Activated T-helper 1 cell treated with anti-CD3 and anti-CD28 coated beads, Interleukin-12 subunit alpha, Interleukin-12 subunit beta, Interleukin-2, Interleukin-4 antibody, amounts not matched to agents 30 ng/mL and 10 ng/mL and 1 ng/mL, durations not matched to agents 14 hours and 24 hours and 36 hours (primary cell): ENCODE measurements at regions of chr4 and their contacts with region 1.

Region 1: DNA sequence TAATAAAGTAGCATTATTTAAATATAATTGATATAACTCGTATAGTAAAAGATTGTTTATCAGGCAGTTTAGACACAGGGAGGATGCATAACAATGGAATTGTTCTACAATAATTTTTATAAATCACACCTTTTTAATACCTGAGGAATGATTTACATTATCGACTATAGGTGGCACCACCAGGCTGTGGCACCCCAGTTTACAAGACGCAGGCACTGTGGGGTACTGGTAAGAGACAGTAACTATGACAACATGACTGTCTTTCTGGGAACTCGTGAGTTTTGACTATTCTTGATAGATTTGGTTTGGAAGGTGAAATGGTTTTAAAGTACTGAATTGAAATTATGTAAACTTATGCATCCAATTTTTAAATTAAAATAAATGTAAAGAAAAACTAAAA is 27.1 kb upstream of the STBD1 start:
- DNase-seq: no peak
- H3K4me3 Mint-ChIP-seq: no peak overlapping the region
- H3K27ac Mint-ChIP-seq: no peak overlapping the region
- H3K4me1 Mint-ChIP-seq: no peaks in the 10 kb centered on the region
- H3K27me3 Mint-ChIP-seq: peaks cover 19% of the 10 kb centered on the region

Region 2: DNA sequence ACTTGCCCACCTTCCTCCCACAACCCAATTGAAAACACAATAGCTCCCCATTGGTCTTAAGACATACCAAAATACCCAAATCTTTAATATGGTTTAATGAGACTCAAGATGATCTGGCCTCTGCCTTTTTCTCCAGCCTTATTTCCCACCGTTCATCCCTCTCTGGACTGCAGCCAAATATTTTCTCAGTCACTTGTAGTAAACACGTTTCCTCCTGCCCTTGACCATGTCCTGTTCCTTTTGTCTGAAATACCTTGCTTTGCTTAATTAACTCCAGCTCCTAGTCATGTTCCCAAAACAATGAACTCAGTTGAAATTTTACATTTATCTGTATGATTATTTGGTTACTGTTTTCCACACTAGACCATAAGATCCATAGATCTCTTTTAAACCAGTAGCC is 122.8 kb before region 1 on chr4:
- intact Hi-C with region 1: no loop called
- DNase-seq: no peak
- H3K4me3 Mint-ChIP-seq: no peak overlapping the region
- H3K27ac Mint-ChIP-seq: no peak overlapping the region
- H3K4me1 Mint-ChIP-seq: no peaks in the 10 kb centered on the region
- H3K27me3 Mint-ChIP-seq: peaks cover 3% of the 10 kb centered on the region

Region 3: DNA sequence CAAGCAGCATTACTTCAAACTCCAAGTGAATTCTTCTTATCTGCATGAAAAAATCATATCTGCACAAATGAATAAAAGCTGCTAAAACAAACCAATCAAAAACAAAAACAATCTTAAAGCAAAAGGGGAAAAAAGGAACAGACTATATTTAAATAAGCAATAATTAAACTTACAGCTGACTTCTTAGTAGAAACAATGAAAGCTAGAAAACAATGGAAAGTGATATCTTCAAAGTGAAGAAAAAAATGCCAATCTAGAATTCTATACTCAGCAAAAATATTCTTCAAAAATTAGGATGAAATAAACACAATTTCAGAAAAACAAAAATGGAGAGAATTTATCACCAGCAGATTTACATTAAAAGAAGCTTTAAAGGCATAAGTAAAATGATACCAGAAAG is 47.0 kb after region 1 on chr4:
- intact Hi-C with region 1: no loop called
- DNase-seq: no peak
- H3K4me3 Mint-ChIP-seq: no peak overlapping the region
- H3K27ac Mint-ChIP-seq: no peak overlapping the region
- H3K4me1 Mint-ChIP-seq: no peaks in the 10 kb centered on the region
- H3K27me3 Mint-ChIP-seq: peaks cover 2% of the 10 kb centered on the region

Region 4: DNA sequence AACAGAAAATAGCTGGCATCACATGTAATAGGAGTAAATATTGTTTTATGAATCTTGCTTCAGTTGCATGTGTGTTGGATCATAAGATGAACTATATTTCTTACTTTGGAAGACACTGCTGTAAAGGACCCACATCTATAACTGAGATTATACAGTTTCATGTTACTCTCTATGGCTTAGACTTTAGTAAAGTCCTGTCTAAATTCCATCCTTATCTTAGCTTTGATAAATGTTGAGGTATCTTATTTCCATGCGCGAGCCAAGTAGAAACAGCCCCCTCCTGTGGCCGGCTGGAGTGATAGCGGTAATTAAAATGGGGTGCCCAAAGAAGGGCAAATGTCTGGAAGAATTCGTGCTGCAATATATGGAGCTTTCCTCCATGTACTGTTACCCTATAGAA is 98.4 kb after region 1 on chr4:
- intact Hi-C with region 1: loop called (anchors 1 kb)
- DNase-seq: no peak
- H3K4me3 Mint-ChIP-seq: no peak overlapping the region
- H3K27ac Mint-ChIP-seq: no peak overlapping the region
- H3K4me1 Mint-ChIP-seq: no peaks in the 10 kb centered on the region
- H3K27me3 Mint-ChIP-seq: peaks cover 10% of the 10 kb centered on the region

Region 5: DNA sequence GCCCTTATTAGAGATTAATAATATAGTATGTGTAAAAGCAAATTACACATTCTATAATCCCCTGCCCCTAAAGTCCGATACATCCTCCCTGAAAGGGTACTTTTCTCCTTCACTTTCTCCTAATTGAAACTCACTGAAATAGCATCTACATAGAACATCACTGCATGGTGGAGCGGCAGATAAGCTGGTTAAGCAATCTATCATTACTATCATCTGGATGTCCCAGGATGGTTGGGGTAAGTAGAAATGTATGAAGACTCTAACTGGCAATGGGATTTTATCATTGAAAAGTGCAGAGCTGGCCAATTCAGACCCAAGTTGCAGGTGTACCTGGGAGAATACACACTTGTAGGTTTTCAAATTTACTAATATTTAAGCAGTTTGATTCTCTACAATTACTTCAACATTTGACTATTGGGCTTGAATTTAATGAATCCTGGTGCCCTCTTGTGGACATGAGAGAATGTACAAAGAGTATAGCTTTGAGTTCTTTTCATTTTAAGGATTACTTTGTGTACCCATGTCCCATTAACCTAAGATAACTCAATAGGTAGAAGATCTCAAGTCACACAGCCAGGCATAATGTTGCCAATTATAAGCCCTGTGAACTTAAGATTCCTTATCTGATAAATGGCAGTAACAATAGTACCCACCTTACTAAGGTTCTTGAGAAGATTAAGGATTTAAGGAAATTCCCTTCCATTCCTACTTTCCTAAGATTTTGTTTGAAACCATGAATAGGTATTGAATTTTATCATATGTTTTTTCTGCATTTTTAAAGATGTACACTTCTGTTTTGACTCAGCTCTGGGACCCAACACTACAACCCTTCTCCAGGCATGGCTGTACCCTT is 225.4 kb after region 1 on chr4:
- intact Hi-C with region 1: loop called (anchors 1 kb)
- DNase-seq: no peak
- H3K4me3 Mint-ChIP-seq: no peak overlapping the region
- H3K27ac Mint-ChIP-seq: no peak overlapping the region
- H3K4me1 Mint-ChIP-seq: no peaks in the 10 kb centered on the region
- H3K27me3 Mint-ChIP-seq: no peaks in the 10 kb centered on the region